H1 (cell line): ENCODE measurements at regions of chr19 and their contacts with region 1.

Region 1: DNA sequence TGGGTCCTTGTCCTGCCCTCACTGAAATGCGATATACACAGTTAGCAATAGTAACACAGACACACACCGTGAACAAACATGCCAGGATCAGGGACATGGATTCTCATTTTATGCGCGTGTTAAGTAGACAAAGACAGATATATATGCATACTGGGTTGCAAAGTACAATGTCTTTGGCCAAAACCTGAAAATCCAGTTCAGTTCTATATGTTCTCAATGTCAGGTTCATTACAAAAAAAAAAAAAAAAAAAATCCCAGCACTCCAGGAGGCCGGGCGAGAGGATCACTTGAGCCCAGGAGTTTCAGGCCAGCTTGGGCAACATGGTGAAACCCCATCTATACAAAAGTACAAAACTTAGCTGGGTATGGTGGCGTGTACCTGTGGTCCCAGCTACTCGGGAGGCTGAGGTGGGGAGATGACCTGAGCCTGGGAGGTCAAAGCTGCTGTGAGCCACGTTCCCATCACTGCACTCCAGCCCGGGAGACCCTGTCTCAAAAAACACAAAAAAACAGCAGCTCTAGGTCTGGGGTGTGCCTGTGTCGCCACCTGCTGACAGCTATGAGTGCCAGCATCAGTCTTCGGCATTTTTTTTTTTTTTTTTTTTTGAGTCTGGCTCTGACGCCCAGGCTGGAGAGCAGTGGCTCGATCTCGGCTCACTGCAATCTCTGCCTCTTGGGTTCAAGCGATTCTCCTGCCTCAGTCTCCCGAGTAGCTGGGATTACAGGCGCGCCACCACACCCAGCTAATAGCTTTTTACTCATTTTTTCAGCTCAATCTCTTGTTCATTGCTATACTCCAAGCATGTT is 10.3 kb downstream of the AP2S1 start:
- DNase-seq: peak in 1 of 2 experiments; percentile 60
- H3K4me3 ChIP-seq: no peak overlapping the region
- H3K27ac ChIP-seq: 0 out of 2 replicates have a peak overlapping the region, but pooled peaks have one; percentile 44
- H3K4me1 ChIP-seq: no peaks in the 10 kb centered on the region
- H3K27me3 ChIP-seq: no peaks in the 10 kb centered on the region
- CTCF ChIP-seq: peak; percentile 78 to 93 (median 85)
- EP300 ChIP-seq: no peak
- POLR2A ChIP-seq: no peak
- RAD21 ChIP-seq: peak; percentile 88 to 90

Region 2: GRCh38 chr19:46746281-46747013 is 93.9 kb before region 1 on chr19 and contains the start of gene STRN4:
- CTCF ChIA-PET with region 1: interaction called, 24 read pairs
- POLR2A ChIA-PET with region 1: interaction called, 5 read pairs
- DNase-seq: peak in 1 of 2 experiments; percentile 67
- H3K4me3 ChIP-seq: peak within 1 kb of the TSS; percentile 84 to 97 (median 93)
- H3K27ac ChIP-seq: peak within 1 kb of the TSS; percentile 85
- H3K4me1 ChIP-seq: peaks cover 0 to 8% (median 2%) of the 10 kb centered on the region in 4 experiments; a peak in 6 of 7 replicates
- H3K27me3 ChIP-seq: no peaks in the 10 kb centered on the region
- CTCF ChIP-seq: no peak
- EP300 ChIP-seq: no peak
- POLR2A ChIP-seq: no peak; a peak in 1 of 3 replicates
- RAD21 ChIP-seq: no peak
- total RNA-seq, gene STRN4: 120 and 124 TPM in 2 replicates

Region 3: GRCh38 chr19:46766569-46767317 is 73.6 kb before region 1 on chr19:
- CTCF ChIA-PET with region 1: interaction called, 14 read pairs
- POLR2A ChIA-PET with region 1: interaction called, 3 read pairs
- DNase-seq: peak in 1 of 2 experiments; percentile 84
- H3K4me3 ChIP-seq: no peak overlapping the region
- H3K27ac ChIP-seq: no peak overlapping the region
- H3K4me1 ChIP-seq: no peaks in the 10 kb centered on the region
- H3K27me3 ChIP-seq: no peaks in the 10 kb centered on the region
- CTCF ChIP-seq: peak; percentile 83 to 95 (median 91)
- EP300 ChIP-seq: peak in 1 of 2 experiments; percentile 24; a peak in 1 of 3 replicates
- POLR2A ChIP-seq: no peak
- RAD21 ChIP-seq: peak; percentile 51 to 67

Region 4: DNA sequence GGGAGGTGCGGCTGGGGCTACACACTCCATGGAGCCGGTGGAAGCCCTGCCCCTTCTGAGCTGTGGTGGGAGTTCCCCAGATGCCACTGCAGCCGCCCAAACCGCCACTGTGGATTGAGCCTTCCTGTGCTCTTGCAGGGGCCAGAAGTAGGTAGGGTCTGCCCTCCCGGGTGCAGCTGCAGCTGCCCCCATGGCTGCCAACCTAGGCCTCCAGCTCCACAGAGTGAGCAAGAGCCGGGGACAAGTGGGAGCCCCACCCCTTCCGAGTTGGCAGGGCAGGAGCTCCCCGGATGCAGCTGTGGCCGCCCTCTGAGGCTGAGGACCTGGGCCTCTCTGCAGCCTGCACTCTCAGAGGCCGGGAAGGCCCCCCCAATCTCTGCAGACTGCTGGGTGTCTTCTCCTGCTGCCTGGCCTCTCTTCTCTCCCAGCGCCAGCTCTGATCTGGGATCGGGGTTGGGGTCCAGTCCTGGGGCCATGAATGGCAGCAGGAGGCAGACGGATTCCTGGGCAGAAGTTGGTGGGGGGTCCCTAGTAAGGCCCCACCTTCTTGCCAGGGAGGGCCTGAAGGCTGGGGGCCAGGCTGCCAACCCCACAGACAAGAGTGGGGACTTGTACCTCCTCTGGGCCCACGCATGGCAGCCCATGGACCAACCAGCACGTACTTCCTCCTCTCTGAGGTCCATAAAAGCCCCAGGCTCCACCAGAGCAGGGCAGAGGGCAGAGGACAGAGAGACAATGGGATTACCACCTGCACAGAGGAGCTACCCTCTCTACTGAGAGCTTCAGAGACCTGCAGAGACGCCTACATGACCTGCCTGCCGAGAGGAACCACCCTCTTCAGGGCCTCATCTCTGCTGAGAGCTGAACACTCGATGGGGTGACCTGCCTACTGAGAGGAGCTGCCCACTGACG is 18.6 kb before region 1 on chr19:
- CTCF ChIA-PET with region 1: interaction called, 19 read pairs
- POLR2A ChIA-PET with region 1: interaction called, 3 read pairs
- DNase-seq: no peak
- H3K4me3 ChIP-seq: no peak overlapping the region
- H3K27ac ChIP-seq: no peak overlapping the region
- H3K4me1 ChIP-seq: no peaks in the 10 kb centered on the region; a peak in 1 of 7 replicates
- H3K27me3 ChIP-seq: no peaks in the 10 kb centered on the region
- CTCF ChIP-seq: no peak
- EP300 ChIP-seq: no peak
- POLR2A ChIP-seq: no peak
- RAD21 ChIP-seq: no peak

Region 5: GRCh38 chr19:46850228-46851203 is 10.2 kb after region 1 on chr19 and contains the start of gene AP2S1:
- CTCF ChIA-PET with region 1: interaction called, 8 read pairs
- POLR2A ChIA-PET with region 1: interaction called, 12 read pairs
- DNase-seq: peak; percentile 91 to 94
- H3K4me3 ChIP-seq: peak within 1 kb of the TSS; percentile 86 to 99 (median 90)
- H3K27ac ChIP-seq: peak within 1 kb of the TSS; percentile 82
- H3K4me1 ChIP-seq: peaks cover 0 to 7% (median 3%) of the 10 kb centered on the region in 4 experiments; a peak in 5 of 7 replicates
- H3K27me3 ChIP-seq: peaks cover 0 to 4% (median 2%) of the 10 kb centered on the region in 4 experiments; a peak in 2 of 7 replicates
- CTCF ChIP-seq: no peak
- EP300 ChIP-seq: no peak
- POLR2A ChIP-seq: peak; percentile 15 to 75
- RAD21 ChIP-seq: no peak
- total RNA-seq, gene AP2S1: 195 and 205 TPM in 2 replicates

Region 6: DNA sequence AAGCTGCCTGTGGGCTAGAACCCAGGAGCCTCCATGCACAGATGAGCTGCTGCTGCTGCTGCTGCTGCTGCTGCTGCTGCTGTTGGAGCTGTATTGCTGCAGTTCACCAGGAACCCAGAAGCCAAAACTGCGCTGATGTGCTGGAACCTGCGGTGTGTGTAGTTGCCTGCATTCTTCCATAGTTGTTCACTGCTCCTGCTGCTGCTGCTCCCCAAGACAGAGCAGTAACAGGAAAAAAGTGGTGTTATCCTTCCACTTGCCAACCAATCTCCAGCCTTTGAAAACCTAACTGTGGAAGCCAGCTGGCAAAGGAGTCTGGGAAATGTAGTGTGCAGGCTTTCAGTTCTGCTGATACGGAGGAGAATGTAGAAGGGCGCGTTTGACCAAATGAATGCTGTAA is 58.4 kb after region 1 on chr19:
- CTCF ChIA-PET with region 1: no interaction called
- POLR2A ChIA-PET with region 1: no interaction called
- DNase-seq: no peak
- H3K4me3 ChIP-seq: no peak overlapping the region
- H3K27ac ChIP-seq: no peak overlapping the region
- H3K4me1 ChIP-seq: peaks cover 0 to 3% (median 1%) of the 10 kb centered on the region in 4 experiments; a peak in 2 of 7 replicates
- H3K27me3 ChIP-seq: no peaks in the 10 kb centered on the region
- CTCF ChIP-seq: no peak
- EP300 ChIP-seq: no peak
- POLR2A ChIP-seq: no peak
- RAD21 ChIP-seq: no peak